ENCODE measurements at regions of chr16 and their contacts with region 1.

Region 1: DNA sequence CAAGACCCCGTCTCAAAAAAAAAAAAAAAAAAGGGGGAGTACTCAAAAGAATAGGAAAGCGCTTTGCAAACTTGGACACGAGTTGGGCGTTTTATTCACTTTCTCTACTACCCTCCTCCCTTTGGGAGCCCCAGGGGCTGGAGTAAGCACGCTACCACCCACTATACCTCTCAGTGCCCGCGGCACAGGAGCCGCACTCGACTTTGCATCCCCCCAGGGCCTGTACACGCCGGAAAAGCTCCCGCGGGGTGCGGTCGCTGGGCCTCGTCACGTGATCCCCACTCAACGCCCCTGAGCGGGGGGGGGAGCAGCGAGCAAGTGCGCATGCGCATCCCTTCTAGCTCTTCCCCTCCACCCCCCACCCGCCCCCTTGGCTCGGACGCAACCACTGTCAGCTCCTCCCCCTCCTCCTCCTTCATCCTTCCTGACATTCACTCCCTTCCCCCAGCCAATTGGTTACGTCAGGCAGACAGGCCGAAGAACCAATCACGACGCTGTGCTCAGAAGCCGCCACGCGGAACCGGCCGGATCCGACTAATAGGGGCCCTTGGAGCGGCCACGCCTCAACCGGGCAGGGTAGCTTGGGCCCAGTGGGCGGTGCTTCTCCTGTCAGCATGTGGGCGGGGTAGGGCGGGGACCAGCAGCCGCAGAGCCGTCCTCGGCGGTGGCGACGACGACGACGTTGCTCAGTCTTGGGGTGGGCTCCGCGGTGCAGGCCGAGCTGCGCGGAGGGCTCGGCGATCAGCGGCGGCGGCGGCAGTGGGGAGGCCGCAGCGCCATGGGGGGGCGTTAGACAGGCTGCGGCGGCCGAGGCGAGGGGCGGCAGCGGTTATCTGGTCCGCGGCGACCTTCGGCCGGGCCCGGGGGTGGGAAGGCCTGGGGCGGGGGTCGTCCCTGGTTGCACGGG is at the start of gene HAPSTR1:
- DNase-seq: peak; percentile 99
- H3K4me3 Mint-ChIP-seq: peak within 1 kb of the TSS; percentile 99
- H3K27ac Mint-ChIP-seq: peak within 1 kb of the TSS; percentile 97
- H3K4me1 Mint-ChIP-seq: peaks cover 29% of the 10 kb centered on the region
- H3K27me3 Mint-ChIP-seq: no peaks in the 10 kb centered on the region
- total RNA-seq, gene HAPSTR1: 65.1 to 65.3 TPM

Region 2: GRCh38 chr16:8868416-8869211 is 222.6 kb before region 1 on chr16 and contains the start of gene CARHSP1:
- CTCF ChIA-PET with region 1: interaction called, 4 read pairs
- POLR2A ChIA-PET with region 1: interaction called, 49 read pairs
- DNase-seq: peak; percentile 89
- H3K4me3 Mint-ChIP-seq: peak within 1 kb of the TSS; percentile 97
- H3K27ac Mint-ChIP-seq: peak within 1 kb of the TSS; percentile 95
- H3K4me1 Mint-ChIP-seq: peaks cover 59% of the 10 kb centered on the region
- H3K27me3 Mint-ChIP-seq: no peaks in the 10 kb centered on the region
- total RNA-seq, gene CARHSP1: 168 to 179 TPM

Region 3: DNA sequence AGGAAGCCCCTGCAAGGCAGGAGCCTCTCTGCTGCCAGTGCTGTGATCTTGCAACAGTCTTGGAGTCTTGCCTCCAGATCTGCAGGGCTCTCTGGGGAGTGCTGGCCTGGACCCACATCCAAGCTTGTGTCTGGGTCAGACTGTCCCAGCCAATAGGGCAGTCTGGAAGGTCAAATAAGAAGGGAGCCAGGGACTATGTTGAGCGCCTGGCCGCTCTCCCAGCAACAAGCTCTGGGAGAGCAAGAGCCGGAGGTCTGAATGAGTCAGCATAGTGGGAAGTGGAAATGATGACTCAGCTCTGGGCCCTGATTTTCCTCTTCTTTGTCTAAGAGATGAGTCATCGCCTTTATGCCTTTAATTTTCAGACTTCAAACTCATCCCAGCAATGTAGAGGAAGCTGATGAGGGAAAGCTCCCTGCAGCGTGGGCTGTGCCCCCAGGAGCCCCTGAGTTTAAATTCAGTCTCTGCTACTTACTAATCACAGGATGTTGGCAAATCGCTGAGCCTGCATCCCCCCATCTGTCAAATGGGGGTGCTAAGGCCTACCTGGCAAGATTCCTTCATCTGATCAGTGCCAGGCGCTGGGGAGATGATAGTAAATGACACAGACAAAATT is 43.4 kb before region 1 on chr16:
- CTCF ChIA-PET with region 1: interaction called, 3 read pairs
- POLR2A ChIA-PET with region 1: interaction called, 14 read pairs
- DNase-seq: peak; percentile 63
- H3K4me3 Mint-ChIP-seq: no peak overlapping the region
- H3K27ac Mint-ChIP-seq: no peak overlapping the region
- H3K4me1 Mint-ChIP-seq: peaks cover 29% of the 10 kb centered on the region
- H3K27me3 Mint-ChIP-seq: no peaks in the 10 kb centered on the region

Region 4: GRCh38 chr16:9079430-9079812 is 11.8 kb before region 1 on chr16:
- CTCF ChIA-PET with region 1: interaction called, 11 read pairs
- POLR2A ChIA-PET with region 1: interaction called, 234 read pairs
- DNase-seq: no peak
- H3K4me3 Mint-ChIP-seq: no peak overlapping the region
- H3K27ac Mint-ChIP-seq: peak overlapping the region; percentile 85
- H3K4me1 Mint-ChIP-seq: peaks cover 34% of the 10 kb centered on the region
- H3K27me3 Mint-ChIP-seq: no peaks in the 10 kb centered on the region

Region 5: GRCh38 chr16:9124908-9125584 is 33.8 kb after region 1 on chr16:
- CTCF ChIA-PET with region 1: interaction called, 6 read pairs
- POLR2A ChIA-PET with region 1: interaction called, 12 read pairs
- DNase-seq: no peak
- H3K4me3 Mint-ChIP-seq: no peak overlapping the region
- H3K27ac Mint-ChIP-seq: no peak overlapping the region
- H3K4me1 Mint-ChIP-seq: peaks cover 54% of the 10 kb centered on the region
- H3K27me3 Mint-ChIP-seq: no peaks in the 10 kb centered on the region

Region 6: GRCh38 chr16:9170470-9170869 is 79.3 kb after region 1 on chr16:
- CTCF ChIA-PET with region 1: no interaction called
- POLR2A ChIA-PET with region 1: no interaction called
- DNase-seq: no peak
- H3K4me3 Mint-ChIP-seq: no peak overlapping the region
- H3K27ac Mint-ChIP-seq: no peak overlapping the region
- H3K4me1 Mint-ChIP-seq: no peaks in the 10 kb centered on the region
- H3K27me3 Mint-ChIP-seq: no peaks in the 10 kb centered on the region

Measured in activated CD4-positive, alpha-beta memory T cell treated with anti-CD3 and anti-CD28 coated beads, Interleukin-2, amount 10 ng/mL, durations not matched to agents 7 days and 5 days (primary cell).